GM10248 (cell line): ENCODE measurements at regions of chr5 and their contacts with region 1.

Region 1: DNA sequence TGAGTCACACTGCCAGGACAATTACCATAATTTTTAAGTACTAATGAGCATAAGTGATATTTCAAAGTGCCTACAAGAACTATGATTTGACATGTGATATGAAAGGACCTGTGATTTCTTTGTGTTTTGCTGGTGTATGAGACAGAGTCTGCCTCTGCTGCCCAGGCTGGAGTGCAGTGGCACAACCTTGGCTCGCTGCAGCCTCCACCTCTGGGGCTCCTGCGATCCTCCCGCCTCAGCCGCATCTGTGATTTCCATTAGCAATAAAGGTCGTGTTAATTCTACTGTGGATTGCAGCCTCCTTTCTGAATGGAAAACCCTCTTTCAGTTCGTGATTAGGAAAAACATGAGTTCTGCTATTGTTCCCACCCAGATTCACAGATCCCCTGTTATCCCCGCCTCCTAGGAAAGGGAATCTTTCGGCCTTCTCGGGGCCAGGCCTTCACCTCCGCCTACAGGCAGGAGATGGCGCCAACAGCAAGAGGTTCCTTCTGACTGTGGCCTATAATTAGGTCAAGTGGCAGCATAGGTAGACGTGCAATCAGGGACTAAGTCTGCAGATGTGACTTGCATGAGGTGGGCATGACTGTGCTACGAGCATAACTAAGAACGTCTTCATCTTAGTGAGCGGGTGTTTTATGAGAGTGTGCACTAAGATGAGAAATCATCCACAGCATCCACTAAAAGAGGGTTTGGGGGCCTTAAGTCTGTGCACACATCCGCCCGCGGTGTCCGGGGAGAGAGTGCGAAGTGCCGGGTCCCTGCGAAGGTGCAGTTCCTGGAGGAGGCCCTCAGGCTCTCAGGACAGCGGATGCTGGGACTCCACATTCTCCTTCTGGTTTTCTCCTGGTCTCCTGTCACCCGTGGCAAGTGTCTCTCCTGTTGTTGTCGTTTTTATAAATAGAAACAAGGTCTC is 23.1 kb downstream of the TRIM7 start:
- DNase-seq: peak; percentile 71
- CTCF ChIP-seq: peak; percentile 80

Region 2: GRCh38 chr5:181167814-181168488 is 14.0 kb before region 1 on chr5:
- CTCF ChIA-PET with region 1: interaction called, 42 read pairs
- POLR2A ChIA-PET with region 1: no interaction called
- DNase-seq: no peak
- CTCF ChIP-seq: peak; percentile 40

Region 3: GRCh38 chr5:181198963-181199519 is 17.1 kb after region 1 on chr5:
- CTCF ChIA-PET with region 1: interaction called, 109 read pairs
- POLR2A ChIA-PET with region 1: no interaction called
- DNase-seq: peak; percentile 71
- CTCF ChIP-seq: no peak

Region 4: GRCh38 chr5:181207214-181208107 is 25.6 kb after region 1 on chr5:
- CTCF ChIA-PET with region 1: interaction called, 109 read pairs
- POLR2A ChIA-PET with region 1: no interaction called
- DNase-seq: no peak
- CTCF ChIP-seq: no peak